ENCODE measurements at regions of chr17 and their contacts with region 1.

Region 1: DNA sequence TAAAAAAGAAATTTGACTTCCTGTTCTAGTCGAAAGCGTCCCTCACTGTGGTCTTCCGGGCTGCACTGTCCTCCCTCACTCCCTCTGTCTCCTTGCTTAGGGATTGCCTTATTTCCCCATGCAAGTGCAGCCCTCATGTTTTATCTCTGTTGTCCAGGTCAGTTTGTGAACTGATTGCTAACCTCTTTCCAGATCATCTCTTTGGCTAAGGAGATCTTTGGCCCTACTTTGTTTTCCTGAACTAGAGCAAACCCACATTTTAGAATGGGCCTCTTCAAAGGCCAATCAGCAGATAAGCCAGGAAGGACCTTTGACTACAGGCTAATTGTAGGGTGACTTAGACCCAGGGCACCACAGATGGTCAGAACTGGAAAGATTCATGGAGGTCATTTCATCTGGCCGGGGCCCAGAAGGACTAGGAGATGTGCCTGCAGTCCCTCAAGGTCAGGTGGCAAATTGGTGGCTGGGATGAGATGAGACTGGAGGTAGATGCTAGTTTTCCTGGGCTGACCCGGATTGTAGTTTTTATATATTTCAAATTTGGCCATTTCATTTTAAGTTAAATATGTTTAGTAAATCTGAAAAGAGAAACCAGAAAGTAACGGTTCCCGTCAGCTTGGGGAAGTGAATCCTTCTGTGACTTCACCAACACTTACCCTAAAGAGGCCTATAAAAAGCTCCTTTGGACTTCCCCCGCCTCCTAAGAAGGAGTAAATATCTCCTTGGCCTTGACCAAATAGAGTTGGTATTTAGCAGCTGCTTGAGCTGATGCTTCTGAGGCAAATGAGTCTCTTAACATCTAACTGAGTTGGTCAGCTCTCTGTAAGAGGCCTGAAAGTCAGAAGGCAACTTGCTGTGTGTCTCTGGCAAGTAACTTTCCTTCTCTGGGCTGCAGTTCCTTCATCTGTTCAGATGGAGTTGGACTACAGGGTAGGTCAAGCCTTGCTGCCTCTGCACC is 6.2 kb upstream of the SLC25A19 start:
- DNase-seq: peak; percentile 97
- ATAC-seq: peak; percentile 74
- H3K4me3 ChIP-seq: peak overlapping the region; percentile 59; the same call in 1 of the 2 replicates
- H3K27ac ChIP-seq: peak overlapping the region; percentile 97
- H3K4me1 ChIP-seq: peaks cover 68% of the 10 kb centered on the region
- H3K27me3 ChIP-seq: no peaks in the 10 kb centered on the region
- CTCF ChIP-seq: no peak
- EP300 ChIP-seq: peak; percentile 93 to 97
- POLR2A ChIP-seq: peak; percentile 79
- RAD21 ChIP-seq: peak; percentile 27; the same call in 1 of the 2 replicates

Region 2: GRCh38 chr17:75261336-75262111 is 34.0 kb before region 1 on chr17 and contains the starts of genes GGA3 and MRPS7:
- CTCF ChIA-PET with region 1: interaction called, 5 read pairs
- POLR2A ChIA-PET with region 1: interaction called, 18 read pairs
- RAD21 ChIA-PET with region 1: interaction called, 3 read pairs
- SMC1A ChIA-PET with region 1: interaction called, 24 read pairs
- in situ Hi-C with region 1: no loop called
- intact Hi-C with region 1: no loop called
- DNase-seq: peak; percentile 75
- ATAC-seq: peak; percentile 96
- H3K4me3 ChIP-seq: peak within 1 kb of the TSS; percentile 86
- H3K27ac ChIP-seq: peak within 1 kb of the TSS; percentile 99
- H3K4me1 ChIP-seq: peaks cover 9% of the 10 kb centered on the region
- H3K27me3 ChIP-seq: no peaks in the 10 kb centered on the region
- CTCF ChIP-seq: no peak; a peak in 1 of 6 replicates
- EP300 ChIP-seq: 0 out of 4 replicates have a peak, but pooled peaks of 1 of the 2 experiments have one; percentile 12
- POLR2A ChIP-seq: peak; percentile 91
- RAD21 ChIP-seq: no peak
- polyA plus RNA-seq, gene GGA3: 7.0 to 8.1 TPM
- polyA plus RNA-seq, gene MRPS7: 161 to 209 TPM

Region 3: DNA sequence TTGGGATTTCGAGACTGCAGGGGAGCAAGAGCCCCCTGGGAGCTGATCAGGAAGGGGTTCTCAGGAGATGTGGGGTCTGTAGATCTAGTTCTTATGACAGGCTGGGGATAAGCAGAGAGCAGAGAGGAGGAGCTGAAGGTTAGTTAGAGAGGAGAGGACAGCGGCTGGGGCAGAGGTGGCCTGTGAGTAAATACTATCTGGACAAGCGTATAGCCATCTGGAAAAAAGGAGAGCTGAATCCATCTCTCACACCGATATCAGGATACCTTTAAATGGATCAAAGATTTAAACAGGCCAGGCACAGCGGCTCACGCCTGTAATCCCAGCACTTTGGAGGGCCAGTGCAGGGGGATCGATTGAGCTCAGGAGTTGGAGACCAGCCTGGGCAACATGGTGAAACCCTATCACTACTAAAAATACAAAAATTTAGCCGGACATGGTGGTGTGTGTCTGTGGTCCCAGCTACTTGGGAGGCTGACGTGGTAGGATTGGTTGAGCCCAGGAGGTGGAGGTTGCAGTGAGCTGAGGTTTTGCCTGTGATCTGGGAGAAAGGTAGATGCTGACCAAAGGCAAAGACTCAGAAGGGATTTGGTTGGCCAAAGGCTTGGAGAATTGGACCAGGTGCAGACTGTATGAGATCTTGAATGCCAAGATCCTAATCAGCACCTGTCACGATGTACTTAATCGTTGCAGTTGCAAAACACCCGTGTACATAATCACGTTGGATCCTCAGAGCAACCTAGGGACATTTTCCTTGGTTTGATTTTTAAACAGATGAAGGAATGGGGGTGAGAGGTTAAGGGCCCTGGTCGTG is 12.7 kb after region 1 on chr17:
- CTCF ChIA-PET with region 1: no interaction called
- POLR2A ChIA-PET with region 1: interaction called, 255 read pairs
- RAD21 ChIA-PET with region 1: interaction called, 364 read pairs
- SMC1A ChIA-PET with region 1: interaction called, 243 read pairs
- in situ Hi-C with region 1: no loop called
- intact Hi-C with region 1: no loop called
- DNase-seq: no peak
- ATAC-seq: no peak
- H3K4me3 ChIP-seq: no peak overlapping the region
- H3K27ac ChIP-seq: no peak overlapping the region
- H3K4me1 ChIP-seq: peaks cover 9% of the 10 kb centered on the region
- H3K27me3 ChIP-seq: no peaks in the 10 kb centered on the region
- CTCF ChIP-seq: no peak
- EP300 ChIP-seq: no peak
- POLR2A ChIP-seq: no peak
- RAD21 ChIP-seq: no peak

Region 4: GRCh38 chr17:75338335-75338734 is 42.9 kb after region 1 on chr17:
- CTCF ChIA-PET with region 1: interaction called, 4 read pairs
- POLR2A ChIA-PET with region 1: interaction called, 4 read pairs
- RAD21 ChIA-PET with region 1: interaction called, 75 read pairs
- SMC1A ChIA-PET with region 1: interaction called, 10 read pairs
- in situ Hi-C with region 1: no loop called
- intact Hi-C with region 1: no loop called
- DNase-seq: no peak
- ATAC-seq: peak; percentile 28
- H3K4me3 ChIP-seq: peak overlapping the region; percentile 40; the same call in 1 of the 2 replicates
- H3K27ac ChIP-seq: peak overlapping the region; percentile 36
- H3K4me1 ChIP-seq: peaks cover 44% of the 10 kb centered on the region
- H3K27me3 ChIP-seq: no peaks in the 10 kb centered on the region
- CTCF ChIP-seq: no peak
- EP300 ChIP-seq: no peak
- POLR2A ChIP-seq: no peak
- RAD21 ChIP-seq: no peak

Region 5: DNA sequence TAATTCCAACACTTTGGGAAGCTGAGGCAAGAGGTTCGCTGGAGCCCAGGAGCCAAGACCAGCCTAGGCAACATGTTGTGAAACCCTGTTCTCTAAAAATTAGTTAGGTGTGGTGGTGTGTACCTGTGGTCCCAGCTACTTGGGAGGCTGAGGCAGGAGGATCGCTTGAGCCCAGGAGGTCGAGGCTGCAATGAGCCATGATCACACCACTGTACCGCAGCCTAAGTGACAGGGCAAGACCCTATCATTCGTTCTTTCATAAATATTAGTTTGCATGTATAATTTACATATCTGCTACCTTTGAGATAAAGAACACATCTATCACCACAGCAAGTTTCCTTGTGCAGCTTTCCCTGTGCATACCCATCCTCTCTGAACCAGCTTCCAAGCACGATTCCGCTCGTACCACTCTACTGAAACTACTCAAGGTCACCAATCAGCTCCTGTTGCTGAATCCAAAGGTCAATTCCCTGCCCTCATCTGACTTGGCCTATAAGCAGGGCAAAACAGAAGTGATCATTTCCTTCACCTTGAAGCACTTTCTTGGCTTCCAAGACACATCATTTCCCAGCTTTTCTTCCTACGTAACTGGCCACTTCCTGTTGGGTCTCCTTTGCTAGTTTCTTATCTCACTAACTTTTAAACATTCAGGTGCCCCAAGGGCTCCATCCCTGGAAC is 60.9 kb after region 1 on chr17:
- CTCF ChIA-PET with region 1: no interaction called
- POLR2A ChIA-PET with region 1: interaction called, 10 read pairs
- RAD21 ChIA-PET with region 1: interaction called, 3 read pairs
- SMC1A ChIA-PET with region 1: interaction called, 5 read pairs
- in situ Hi-C with region 1: no loop called
- intact Hi-C with region 1: no loop called
- DNase-seq: no peak
- ATAC-seq: no peak
- H3K4me3 ChIP-seq: no peak overlapping the region
- H3K27ac ChIP-seq: no peak overlapping the region
- H3K4me1 ChIP-seq: peaks cover 25% of the 10 kb centered on the region
- H3K27me3 ChIP-seq: no peaks in the 10 kb centered on the region
- CTCF ChIP-seq: no peak
- EP300 ChIP-seq: no peak
- POLR2A ChIP-seq: no peak
- RAD21 ChIP-seq: no peak

Region 6: GRCh38 chr17:75393523-75394331 is 98.2 kb after region 1 on chr17:
- CTCF ChIA-PET with region 1: interaction called, 22 read pairs
- POLR2A ChIA-PET with region 1: interaction called, 5 read pairs
- RAD21 ChIA-PET with region 1: interaction called, 19 read pairs
- SMC1A ChIA-PET with region 1: interaction called, 16 read pairs
- in situ Hi-C with region 1: no loop called
- intact Hi-C with region 1: no loop called
- DNase-seq: peak; percentile 79
- ATAC-seq: peak; percentile 95
- H3K4me3 ChIP-seq: peak overlapping the region; percentile 77
- H3K27ac ChIP-seq: peak overlapping the region; percentile 57
- H3K4me1 ChIP-seq: peaks cover 21% of the 10 kb centered on the region
- H3K27me3 ChIP-seq: no peaks in the 10 kb centered on the region
- CTCF ChIP-seq: 0 out of 6 replicates have a peak, but pooled peaks of 1 of the 3 experiments have one; percentile 3
- EP300 ChIP-seq: no peak
- POLR2A ChIP-seq: peak; percentile 51; the same call in 1 of the 2 replicates
- RAD21 ChIP-seq: no peak

Region 7: GRCh38 chr17:75405365-75406221 is 110.1 kb after region 1 on chr17 and contains the start of gene GRB2:
- CTCF ChIA-PET with region 1: interaction called, 65 read pairs
- POLR2A ChIA-PET with region 1: interaction called, 30 read pairs
- RAD21 ChIA-PET with region 1: interaction called, 18 read pairs
- SMC1A ChIA-PET with region 1: interaction called, 12 read pairs
- in situ Hi-C with region 1: no loop called
- intact Hi-C with region 1: loop called (anchors 2 kb)
- DNase-seq: peak; percentile 83
- ATAC-seq: peak; percentile 82
- H3K4me3 ChIP-seq: peak within 1 kb of the TSS; percentile 87
- H3K27ac ChIP-seq: peak within 1 kb of the TSS; percentile 91
- H3K4me1 ChIP-seq: peaks cover 16% of the 10 kb centered on the region
- H3K27me3 ChIP-seq: no peaks in the 10 kb centered on the region
- CTCF ChIP-seq: no peak
- EP300 ChIP-seq: peak in 1 of 2 experiments; percentile 30; a peak in 1 of 4 replicates
- POLR2A ChIP-seq: peak; percentile 98
- RAD21 ChIP-seq: no peak
- polyA plus RNA-seq, gene GRB2: 113 to 152 TPM

Region 8: GRCh38 chr17:75764711-75765421 is 469.4 kb after region 1 on chr17 and contains the start of gene GALK1:
- CTCF ChIA-PET with region 1: no interaction called
- POLR2A ChIA-PET with region 1: no interaction called
- RAD21 ChIA-PET with region 1: no interaction called
- SMC1A ChIA-PET with region 1: no interaction called
- in situ Hi-C with region 1: no loop called
- intact Hi-C with region 1: no loop called
- DNase-seq: no peak
- ATAC-seq: peak; percentile 96
- H3K4me3 ChIP-seq: peak within 1 kb of the TSS; percentile 76; the same call in 1 of the 2 replicates
- H3K27ac ChIP-seq: peak within 1 kb of the TSS; percentile 48; the same call in 1 of the 2 replicates
- H3K4me1 ChIP-seq: peaks cover 12% of the 10 kb centered on the region
- H3K27me3 ChIP-seq: no peaks in the 10 kb centered on the region
- CTCF ChIP-seq: peak; percentile 49 to 83 (median 78)
- EP300 ChIP-seq: no peak
- POLR2A ChIP-seq: peak; percentile 83
- RAD21 ChIP-seq: peak; percentile 49
- polyA plus RNA-seq, gene GALK1: 0.21 to 5.9 TPM